CD4-positive, alpha-beta memory T cell (primary cell): ENCODE measurements at regions of chr15 and their contacts with region 1.

Region 1: DNA sequence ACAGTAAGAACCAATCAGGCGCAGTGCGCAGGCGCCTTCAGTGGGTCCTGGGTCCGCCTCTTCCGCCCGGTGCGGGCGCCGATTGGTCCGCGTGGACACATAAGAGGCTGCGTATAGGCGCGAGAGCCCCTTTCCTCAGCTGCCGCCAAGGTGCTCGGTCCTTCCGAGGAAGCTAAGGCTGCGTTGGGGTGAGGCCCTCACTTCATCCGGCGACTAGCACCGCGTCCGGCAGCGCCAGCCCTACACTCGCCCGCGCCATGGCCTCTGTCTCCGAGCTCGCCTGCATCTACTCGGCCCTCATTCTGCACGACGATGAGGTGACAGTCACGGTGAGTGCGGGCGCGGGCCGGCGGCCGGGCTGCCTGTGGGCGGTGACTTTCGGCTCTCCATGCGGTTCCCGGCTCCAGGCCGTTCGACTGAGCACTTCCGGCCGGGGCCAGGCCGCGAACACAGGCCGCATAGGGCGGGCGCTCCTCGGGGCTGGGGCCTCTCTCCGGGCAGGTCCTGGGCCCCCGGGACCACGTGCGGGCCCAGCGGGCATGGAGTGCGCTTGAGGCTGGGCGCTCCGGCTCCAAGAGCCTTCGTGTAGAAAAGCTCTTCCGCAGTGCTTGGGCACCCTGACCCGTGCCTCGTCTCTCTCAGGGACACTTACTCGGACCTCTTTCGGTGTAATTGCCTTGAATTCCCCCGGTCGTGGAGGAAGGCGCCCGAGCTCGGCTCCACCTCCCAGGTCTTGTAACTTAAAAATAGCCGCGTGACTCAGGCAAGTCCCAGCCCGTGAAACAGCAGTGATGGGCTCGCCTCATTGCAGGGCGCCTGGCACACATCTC is at the start of gene RPLP1:
- DNase-seq: peak; percentile 96
- H3K4me3 ChIP-seq: peak within 1 kb of the TSS; percentile 78 to 91
- H3K4me3 Mint-ChIP-seq: peak within 1 kb of the TSS; percentile 94 to 100 (median 98)
- H3K27ac ChIP-seq: peak within 1 kb of the TSS; percentile 92
- H3K27ac Mint-ChIP-seq: peak within 1 kb of the TSS; percentile 94 to 99 (median 98)
- H3K4me1 ChIP-seq: peaks cover 36% of the 10 kb centered on the region
- H3K4me1 Mint-ChIP-seq: peaks cover 28 to 56% (median 37%) of the 10 kb centered on the region in 4 donors
- H3K27me3 ChIP-seq: no peaks in the 10 kb centered on the region
- H3K27me3 Mint-ChIP-seq: no peaks in the 10 kb centered on the region
- total RNA-seq, gene RPLP1: 2,753 to 2,900 TPM

Region 2: GRCh38 chr15:69160141-69160993 is 292.5 kb before region 1 on chr15 and contains the start of gene GLCE:
- CTCF ChIA-PET with region 1: interaction called, 3 read pairs
- POLR2A ChIA-PET with region 1: interaction called, 22 read pairs
- intact Hi-C with region 1: loop called (anchors 1 kb)
- DNase-seq: peak; percentile 92 to 96 (median 94)
- H3K4me3 ChIP-seq: peak within 1 kb of the TSS; percentile 53 to 70
- H3K4me3 Mint-ChIP-seq: peak within 1 kb of the TSS; percentile 94 to 99 (median 97)
- H3K27ac ChIP-seq: peak within 1 kb of the TSS; percentile 65
- H3K27ac Mint-ChIP-seq: peak within 1 kb of the TSS; percentile 86 to 97 (median 95)
- H3K4me1 ChIP-seq: peaks cover 14% of the 10 kb centered on the region
- H3K4me1 Mint-ChIP-seq: peaks cover 18 to 32% (median 23%) of the 10 kb centered on the region in 4 donors
- H3K27me3 ChIP-seq: no peaks in the 10 kb centered on the region
- H3K27me3 Mint-ChIP-seq: peaks cover 0 to 8% of the 10 kb centered on the region in 2 donors
- total RNA-seq, gene GLCE: 7.2 TPM

Region 3: GRCh38 chr15:69424748-69425413 is 28.0 kb before region 1 on chr15:
- CTCF ChIA-PET with region 1: no interaction called
- POLR2A ChIA-PET with region 1: interaction called, 89 read pairs
- intact Hi-C with region 1: no loop called
- DNase-seq: no peak
- H3K4me3 ChIP-seq: no peak overlapping the region
- H3K4me3 Mint-ChIP-seq: no peak overlapping the region
- H3K27ac ChIP-seq: no peak overlapping the region
- H3K27ac Mint-ChIP-seq: no peak overlapping the region
- H3K4me1 ChIP-seq: no peaks in the 10 kb centered on the region
- H3K4me1 Mint-ChIP-seq: no peaks in the 10 kb centered on the region
- H3K27me3 ChIP-seq: no peaks in the 10 kb centered on the region
- H3K27me3 Mint-ChIP-seq: no peaks in the 10 kb centered on the region

Region 4: GRCh38 chr15:69468241-69469121 is 15.6 kb after region 1 on chr15:
- CTCF ChIA-PET with region 1: interaction called, 94 read pairs
- POLR2A ChIA-PET with region 1: interaction called, 488 read pairs
- intact Hi-C with region 1: loop called (anchors 1 kb)
- DNase-seq: peak; percentile 90 to 98 (median 94)
- H3K4me3 ChIP-seq: peak overlapping the region in 1 of 2 donors; percentile 34
- H3K4me3 Mint-ChIP-seq: peak overlapping the region; percentile 50 to 87 (median 78)
- H3K27ac ChIP-seq: peak overlapping the region; percentile 90
- H3K27ac Mint-ChIP-seq: peak overlapping the region; percentile 97 to 100 (median 100)
- H3K4me1 ChIP-seq: peaks cover 41% of the 10 kb centered on the region
- H3K4me1 Mint-ChIP-seq: peaks cover 22 to 50% (median 29%) of the 10 kb centered on the region in 4 donors
- H3K27me3 ChIP-seq: no peaks in the 10 kb centered on the region
- H3K27me3 Mint-ChIP-seq: no peaks in the 10 kb centered on the region

Region 5: GRCh38 chr15:70535071-70535954 is 1082.4 kb after region 1 on chr15:
- CTCF ChIA-PET with region 1: no interaction called
- POLR2A ChIA-PET with region 1: interaction called, 12 read pairs
- intact Hi-C with region 1: no loop called
- DNase-seq: peak; percentile 66 to 77 (median 73)
- H3K4me3 ChIP-seq: peak overlapping the region; percentile 19 to 53
- H3K4me3 Mint-ChIP-seq: peak overlapping the region; percentile 84 to 95 (median 90)
- H3K27ac ChIP-seq: peak overlapping the region; percentile 23
- H3K27ac Mint-ChIP-seq: peak overlapping the region; percentile 86 to 95 (median 89)
- H3K4me1 ChIP-seq: peaks cover 65% of the 10 kb centered on the region
- H3K4me1 Mint-ChIP-seq: peaks cover 44 to 78% (median 61%) of the 10 kb centered on the region in 4 donors
- H3K27me3 ChIP-seq: no peaks in the 10 kb centered on the region
- H3K27me3 Mint-ChIP-seq: no peaks in the 10 kb centered on the region